Posterior cingulate gyrus (tissue), 11 donors: ENCODE measurements at regions of chr3 and their contacts with region 1.

Region 1: GRCh38 chr3:187327845-187328244 is 36.3 kb upstream of the MASP1 start:
- DNase-seq: no peak

Region 2: GRCh38 chr3:187406927-187407326 is 79.1 kb after region 1 on chr3:
- intact Hi-C with region 1: no loop called
- DNase-seq: no peak

Region 3: DNA sequence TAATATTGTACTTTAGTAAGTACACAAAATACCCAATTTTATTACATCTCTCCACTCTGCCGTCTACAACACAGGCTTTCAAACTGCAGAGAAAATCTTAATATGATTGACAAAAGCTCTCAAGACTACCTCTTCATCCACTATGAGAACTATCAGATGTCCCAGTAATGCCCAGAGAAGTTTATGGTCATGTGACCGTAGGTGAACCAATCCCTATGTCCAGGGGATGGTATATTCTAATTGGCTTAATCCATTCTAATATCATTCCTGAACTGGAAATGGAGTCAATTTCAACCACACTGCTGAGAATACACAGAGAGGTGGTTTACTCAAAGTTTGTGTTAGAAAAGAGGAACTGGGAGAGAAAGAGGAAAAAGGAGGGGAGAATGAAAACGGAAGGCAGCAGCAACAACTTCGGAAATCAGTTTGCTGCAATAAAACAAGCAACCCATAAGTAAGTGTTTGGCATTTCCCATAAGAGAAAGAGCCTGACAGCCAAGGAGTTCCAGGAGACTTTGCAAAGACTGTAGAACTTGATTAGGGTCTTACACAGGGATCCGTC is 335.1 kb after region 1 on chr3:
- intact Hi-C with region 1: no loop called
- DNase-seq: no peak

Region 4: GRCh38 chr3:187828579-187829452 is 501.0 kb after region 1 on chr3:
- intact Hi-C with region 1: no loop called
- DNase-seq: no peak

Region 5: DNA sequence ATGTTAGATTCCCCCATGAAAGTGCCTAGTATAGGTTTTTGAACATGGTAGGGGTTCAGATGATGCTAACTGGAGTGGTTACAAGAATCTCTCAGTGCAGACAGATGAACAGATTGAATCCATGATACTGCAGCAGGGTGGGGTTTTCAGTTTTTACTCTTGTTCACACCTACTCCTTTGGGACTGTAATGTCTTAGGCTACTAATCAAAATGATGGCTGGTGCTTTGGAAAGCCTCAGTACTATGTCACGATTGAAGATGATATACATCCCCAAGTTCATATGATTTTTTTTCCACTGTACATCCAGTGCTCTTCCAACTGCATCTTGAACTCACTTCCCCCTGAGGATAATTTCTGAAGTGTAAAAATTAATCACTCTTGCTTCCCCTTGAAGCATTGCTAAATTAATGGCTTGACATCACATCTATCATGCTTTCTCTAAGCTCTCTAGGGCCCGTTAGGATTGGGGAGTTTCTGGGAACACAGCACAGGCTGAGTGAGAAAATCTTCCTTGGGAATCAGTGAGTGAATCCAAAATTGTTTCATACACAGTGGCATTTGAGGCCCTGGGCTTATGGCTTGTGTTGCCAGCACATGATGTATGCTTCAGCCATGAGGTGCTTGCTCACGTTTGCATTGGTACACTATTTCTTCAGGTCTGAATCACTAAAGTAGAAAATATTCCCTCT is 1728.9 kb after region 1 on chr3:
- intact Hi-C with region 1: loop called (anchors 5 kb)
- DNase-seq: no peak